Esophagus muscularis mucosa (tissue), 4 donors: ENCODE measurements at regions of chr9 and their contacts with region 1.

Region 1: DNA sequence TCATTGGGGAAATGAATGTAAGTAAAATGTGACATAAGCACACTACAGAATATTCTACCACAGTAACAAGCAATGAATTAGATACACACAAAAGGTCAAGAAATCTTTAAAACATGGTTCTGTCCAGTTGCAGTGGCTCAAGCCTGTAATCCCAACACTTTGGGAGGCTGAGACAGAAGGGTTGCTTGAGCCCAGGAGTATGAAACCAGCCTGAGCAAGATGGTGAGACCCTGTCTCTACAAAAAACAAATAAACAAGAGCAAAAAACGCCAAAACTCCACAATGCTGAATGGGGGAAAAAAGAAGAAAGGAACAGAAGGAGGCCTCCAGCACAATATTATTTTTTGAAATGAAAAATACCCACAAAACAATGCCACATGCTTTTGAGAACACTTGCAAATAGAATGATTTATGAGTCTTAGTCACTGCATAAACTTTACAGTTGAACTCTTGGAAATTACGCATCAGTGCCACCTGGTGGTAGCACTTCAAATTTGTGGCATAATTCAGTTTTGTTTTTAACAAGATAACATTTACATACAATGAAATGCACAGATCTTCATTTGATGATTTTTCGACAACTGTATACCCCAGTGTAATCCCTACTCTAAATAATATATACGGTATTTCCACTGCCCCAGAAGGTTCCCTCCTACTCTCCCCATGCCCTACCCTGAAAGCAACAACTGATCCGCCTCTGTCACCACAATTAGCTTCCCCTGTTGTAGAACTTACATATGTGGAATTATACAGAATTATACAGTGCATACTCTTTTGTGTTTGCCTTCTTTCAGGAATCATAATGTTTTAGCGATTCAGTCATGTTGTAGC is 14.4 kb upstream of the SPINK4 start:
- DNase-seq: no peak
- H3K4me3 ChIP-seq: no peak overlapping the region
- H3K27ac ChIP-seq: no peak overlapping the region
- H3K4me1 ChIP-seq: peaks cover 4 to 10% (median 7%) of the 10 kb centered on the region in 4 donors
- H3K27me3 ChIP-seq: no peaks in the 10 kb centered on the region
- CTCF ChIP-seq: peak; percentile 75 to 85 (median 79)
- EP300 ChIP-seq: no peak
- POLR2A ChIP-seq: no peak

Region 2: DNA sequence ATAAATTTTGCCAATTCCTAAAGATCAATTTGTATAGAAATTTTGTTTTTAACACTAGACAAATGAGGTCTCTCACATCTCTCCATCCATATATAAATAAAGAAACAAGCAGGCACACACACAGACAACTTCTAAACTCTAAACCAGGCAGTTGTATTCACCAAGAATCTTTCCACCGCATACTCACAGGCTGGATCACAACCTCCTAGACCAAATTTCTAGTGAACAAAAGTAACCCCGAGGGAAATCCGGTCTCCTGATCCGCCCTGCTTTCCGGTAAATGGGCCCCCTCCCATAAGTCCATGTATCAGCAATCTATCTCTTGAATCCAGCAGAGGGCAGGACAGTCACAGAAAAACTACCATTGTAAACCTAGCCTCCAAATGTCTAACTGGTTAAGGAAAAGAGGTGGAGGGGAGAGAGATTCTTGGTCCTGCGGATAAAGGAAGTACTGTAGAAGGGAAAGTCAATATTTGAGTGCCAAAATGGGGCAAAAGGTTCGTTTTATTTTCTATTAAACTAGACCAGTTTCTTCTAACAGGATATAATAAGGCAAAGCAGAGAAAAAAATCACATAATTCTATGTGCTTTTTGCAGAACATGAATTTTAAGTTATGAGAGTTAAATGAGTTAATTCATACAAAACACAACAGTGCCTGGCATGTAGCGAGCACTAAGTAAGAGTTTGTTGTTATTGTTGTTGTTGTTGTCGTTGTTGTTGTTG is 144.2 kb before region 1 on chr9:
- intact Hi-C with region 1: loop called (anchors 1 kb)
- DNase-seq: no peak
- H3K4me3 ChIP-seq: peak overlapping the region in 1 of 4 donors; percentile 23
- H3K27ac ChIP-seq: peak overlapping the region; percentile 0 to 49 (median 14)
- H3K4me1 ChIP-seq: peaks cover 0 to 16% (median 9%) of the 10 kb centered on the region in 4 donors
- H3K27me3 ChIP-seq: no peaks in the 10 kb centered on the region
- CTCF ChIP-seq: peak; percentile 71 to 90 (median 72)
- EP300 ChIP-seq: no peak
- POLR2A ChIP-seq: no peak

Region 3: GRCh38 chr9:33099725-33100350 is 125.7 kb before region 1 on chr9:
- intact Hi-C with region 1: loop called (anchors 5 kb)
- DNase-seq: no peak
- H3K4me3 ChIP-seq: no peak overlapping the region
- H3K27ac ChIP-seq: no peak overlapping the region
- H3K4me1 ChIP-seq: peaks cover 0 to 7% (median 0%) of the 10 kb centered on the region in 4 donors
- H3K27me3 ChIP-seq: no peaks in the 10 kb centered on the region
- CTCF ChIP-seq: no peak
- EP300 ChIP-seq: no peak
- POLR2A ChIP-seq: no peak

Region 4: DNA sequence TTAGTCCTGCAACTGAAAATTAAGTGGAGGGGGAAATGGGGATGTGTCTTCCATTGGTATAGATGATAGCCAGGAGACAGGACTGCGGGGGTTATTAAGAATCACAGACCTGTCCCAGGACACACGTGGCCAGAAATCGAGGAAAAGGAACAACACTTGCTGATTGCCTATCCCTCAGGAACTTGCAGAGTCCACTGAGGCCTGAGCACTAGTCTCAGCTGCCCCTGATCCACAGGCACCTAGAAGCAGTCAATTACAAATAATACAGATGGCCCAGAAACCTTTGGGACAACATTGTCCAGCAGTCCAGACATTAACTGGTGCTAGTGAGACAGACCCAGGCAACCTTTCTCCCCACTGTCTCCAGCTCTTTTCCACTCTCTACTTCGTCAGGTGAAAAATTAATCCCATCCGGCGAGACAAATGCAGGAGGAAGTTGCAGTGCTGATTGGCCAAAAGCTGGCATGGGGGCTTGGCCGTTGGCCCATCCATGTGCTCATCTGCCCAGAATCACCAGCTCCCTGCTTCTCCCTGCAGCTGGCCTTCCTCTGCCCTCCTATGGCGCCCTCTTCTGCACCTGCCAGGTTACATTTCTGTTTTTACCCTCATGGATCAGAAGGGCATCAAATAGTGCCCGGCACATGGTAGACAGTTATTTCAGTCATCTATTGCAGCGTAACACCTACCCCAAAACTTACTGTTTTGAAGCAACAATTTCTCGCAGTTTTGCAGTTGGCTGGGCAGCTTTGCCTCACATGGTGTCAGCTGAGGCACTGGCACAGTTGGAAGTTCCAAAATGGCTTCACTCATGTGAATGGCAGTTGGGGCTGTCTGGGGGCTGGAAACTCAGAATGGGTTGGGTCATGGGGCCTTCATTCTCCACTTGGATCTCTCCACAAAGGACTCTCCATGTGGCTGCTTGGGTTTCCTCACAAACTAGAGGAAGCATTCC is 54.8 kb before region 1 on chr9:
- intact Hi-C with region 1: loop called (anchors 5 kb)
- DNase-seq: no peak
- H3K4me3 ChIP-seq: no peak overlapping the region
- H3K27ac ChIP-seq: peak overlapping the region in 1 of 4 donors; percentile 26
- H3K4me1 ChIP-seq: peaks cover 10 to 26% (median 21%) of the 10 kb centered on the region in 4 donors
- H3K27me3 ChIP-seq: no peaks in the 10 kb centered on the region
- CTCF ChIP-seq: peak; percentile 46 to 56 (median 48)
- EP300 ChIP-seq: no peak
- POLR2A ChIP-seq: no peak

Region 5: GRCh38 chr9:33690143-33690933 is 464.8 kb after region 1 on chr9:
- intact Hi-C with region 1: no loop called
- DNase-seq: no peak
- H3K4me3 ChIP-seq: no peak overlapping the region
- H3K27ac ChIP-seq: no peak overlapping the region
- H3K4me1 ChIP-seq: no peaks in the 10 kb centered on the region
- H3K27me3 ChIP-seq: no peaks in the 10 kb centered on the region
- CTCF ChIP-seq: no peak
- EP300 ChIP-seq: no peak
- POLR2A ChIP-seq: no peak